ENCODE measurements at regions of chr2 and their contacts with region 1.

Region 1: DNA sequence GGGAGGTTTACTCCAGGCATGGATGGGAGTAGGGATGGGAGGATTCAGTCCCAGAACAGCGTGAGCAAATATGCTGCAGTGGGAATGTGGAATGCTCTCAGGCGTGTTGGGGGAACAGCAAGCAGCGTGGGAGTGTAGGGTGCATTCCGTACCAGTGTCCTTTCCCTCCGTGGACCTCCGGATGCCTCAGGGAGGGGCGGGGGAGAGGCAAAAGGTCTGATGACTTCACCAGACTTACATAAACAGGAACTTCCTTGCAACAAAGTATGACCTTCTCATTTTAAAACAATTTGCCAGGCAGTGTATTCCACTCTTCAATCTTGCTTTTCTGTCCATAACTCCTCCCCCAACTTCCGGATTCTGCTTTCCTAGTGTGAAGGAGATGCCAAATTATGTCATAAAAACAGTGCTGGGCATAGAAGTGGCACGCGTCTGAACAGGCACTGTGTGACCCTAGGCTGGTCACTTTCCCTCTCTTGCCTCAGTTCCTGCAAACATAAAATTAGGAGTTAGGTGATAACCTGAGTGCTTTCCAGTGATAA is 36.9 kb downstream of the RPL37A start:
- DNase-seq: peak; percentile 82 to 92 (median 89)
- H3K4me3 ChIP-seq: no peak overlapping the region
- H3K27ac ChIP-seq: peak overlapping the region; percentile 14 to 85
- H3K4me1 ChIP-seq: peaks cover 16% of the 10 kb centered on the region
- H3K27me3 ChIP-seq: no peaks in the 10 kb centered on the region
- CTCF ChIP-seq: no peak
- EP300 ChIP-seq: peak; percentile 66
- POLR2A ChIP-seq: peak; percentile 12

Region 2: GRCh38 chr2:216590780-216591179 is 55.3 kb after region 1 on chr2:
- intact Hi-C with region 1: loop called in 1 of 4 experiments (anchors 5 kb)
- DNase-seq: peak; percentile 69 to 90 (median 73)
- H3K4me3 ChIP-seq: no peak overlapping the region
- H3K27ac ChIP-seq: no peak overlapping the region
- H3K4me1 ChIP-seq: peaks cover 3% of the 10 kb centered on the region
- H3K27me3 ChIP-seq: no peaks in the 10 kb centered on the region
- CTCF ChIP-seq: peak in 1 of 3 donors; percentile 10
- EP300 ChIP-seq: no peak
- POLR2A ChIP-seq: no peak

Measured in ovary (tissue), 10 donors.